ENCODE measurements at regions of chr3 and their contacts with region 1.

Region 1: DNA sequence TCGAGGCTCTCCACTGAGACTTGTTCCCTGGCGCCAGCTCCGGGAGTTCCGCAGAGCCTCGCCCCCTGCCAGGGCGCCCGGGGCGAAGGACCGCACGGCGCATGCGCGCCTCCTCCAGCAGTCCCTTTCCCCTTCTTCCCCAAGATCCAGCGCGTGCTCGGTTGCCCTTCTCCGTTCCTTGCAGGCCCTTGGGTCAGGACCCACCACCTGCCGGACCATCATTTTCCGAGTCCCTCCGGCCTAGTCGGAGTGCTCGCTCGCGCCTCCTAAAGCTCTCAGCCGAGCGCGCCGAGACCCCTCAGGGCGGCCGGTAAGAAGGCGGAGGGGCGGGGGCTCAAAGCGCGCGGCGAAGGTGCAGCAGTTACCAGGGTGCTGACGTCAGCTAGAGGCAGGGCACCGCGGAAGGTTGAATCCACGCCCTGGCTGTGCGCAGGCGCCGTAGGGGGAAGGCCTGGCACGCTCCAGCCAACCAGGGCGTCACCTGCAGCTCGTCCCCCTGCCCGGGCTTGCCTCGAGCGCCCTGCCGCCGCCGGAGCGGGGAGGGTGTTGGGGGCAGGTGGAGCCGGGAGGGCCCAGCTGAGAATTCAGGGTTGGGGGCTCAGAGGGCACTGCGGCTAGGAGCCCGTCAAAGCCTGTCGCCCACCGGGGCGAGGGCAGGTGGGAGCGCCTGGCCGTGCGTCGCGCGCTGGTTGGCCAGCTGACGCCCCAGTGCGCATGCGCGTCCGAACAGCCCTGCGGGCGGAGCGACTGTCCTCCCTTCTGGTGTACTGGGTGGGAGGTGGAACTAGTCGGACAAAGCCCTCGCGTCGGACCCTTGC is at the start of gene TCAIM:
- DNase-seq: peak; percentile 98
- H3K4me3 Mint-ChIP-seq: peak within 1 kb of the TSS; percentile 98
- H3K27ac Mint-ChIP-seq: peak within 1 kb of the TSS; percentile 97
- H3K4me1 Mint-ChIP-seq: peaks cover 17% of the 10 kb centered on the region
- H3K27me3 Mint-ChIP-seq: peaks cover 4% of the 10 kb centered on the region
- total RNA-seq, gene TCAIM: 13.6 and 14.4 TPM in 2 replicates

Region 2: DNA sequence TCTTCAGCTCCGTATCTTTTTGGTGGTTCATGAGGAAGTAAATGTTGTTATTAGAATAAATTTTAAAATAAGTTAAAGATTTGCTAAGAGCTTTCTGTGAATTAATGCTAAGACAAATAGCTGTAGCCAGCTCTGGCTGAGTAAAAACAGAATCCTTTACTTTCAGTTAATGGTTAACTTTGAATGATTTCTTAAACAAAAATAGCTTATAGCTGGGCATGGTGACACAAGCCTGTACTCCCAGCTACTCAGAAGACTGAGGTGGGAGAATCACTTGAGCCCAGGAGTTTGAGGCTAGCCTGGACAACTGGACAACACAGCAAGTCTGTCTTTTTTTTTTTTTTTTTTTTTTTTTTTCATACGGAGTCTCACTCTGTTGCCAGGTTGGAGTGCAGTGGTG is 25.4 kb after region 1 on chr3:
- intact Hi-C with region 1: no loop called
- DNase-seq: no peak
- H3K4me3 Mint-ChIP-seq: no peak overlapping the region
- H3K27ac Mint-ChIP-seq: no peak overlapping the region
- H3K4me1 Mint-ChIP-seq: no peaks in the 10 kb centered on the region
- H3K27me3 Mint-ChIP-seq: no peaks in the 10 kb centered on the region

Region 3: GRCh38 chr3:44439499-44440295 is 101.5 kb after region 1 on chr3:
- intact Hi-C with region 1: loop called (anchors 1 kb)
- DNase-seq: peak; percentile 69
- H3K4me3 Mint-ChIP-seq: peak overlapping the region; percentile 65
- H3K27ac Mint-ChIP-seq: peak overlapping the region; percentile 84
- H3K4me1 Mint-ChIP-seq: peaks cover 46% of the 10 kb centered on the region
- H3K27me3 Mint-ChIP-seq: no peaks in the 10 kb centered on the region

Region 4: GRCh38 chr3:44510000-44510368 is 171.8 kb after region 1 on chr3:
- intact Hi-C with region 1: loop called (anchors 1 kb)
- DNase-seq: no peak
- H3K4me3 Mint-ChIP-seq: peak overlapping the region; percentile 90
- H3K27ac Mint-ChIP-seq: peak overlapping the region; percentile 75
- H3K4me1 Mint-ChIP-seq: peaks cover 38% of the 10 kb centered on the region
- H3K27me3 Mint-ChIP-seq: no peaks in the 10 kb centered on the region

Region 5: DNA sequence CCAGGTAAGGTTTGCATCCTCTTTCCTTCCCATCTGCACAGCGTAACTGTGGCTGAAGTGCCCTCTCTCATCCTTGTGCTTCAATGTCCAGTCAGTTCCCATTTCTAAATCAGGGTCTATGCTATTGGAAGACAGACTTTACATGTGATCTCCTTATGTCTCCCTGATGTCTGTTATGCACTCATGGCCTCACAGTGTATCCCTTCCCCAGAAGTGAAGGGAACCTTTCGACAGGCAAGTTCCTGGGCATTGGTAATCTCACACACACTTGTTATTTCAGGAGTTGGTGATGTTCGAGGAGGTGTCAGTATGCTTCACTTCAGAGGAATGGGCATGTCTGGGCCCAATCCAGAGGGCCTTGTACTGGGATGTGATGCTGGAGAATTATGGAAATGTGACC is 294.0 kb after region 1 on chr3:
- intact Hi-C with region 1: no loop called
- DNase-seq: no peak
- H3K4me3 Mint-ChIP-seq: no peak overlapping the region
- H3K27ac Mint-ChIP-seq: no peak overlapping the region
- H3K4me1 Mint-ChIP-seq: peaks cover 4% of the 10 kb centered on the region
- H3K27me3 Mint-ChIP-seq: no peaks in the 10 kb centered on the region

Region 6: GRCh38 chr3:44861412-44862220 is 523.4 kb after region 1 on chr3 and contains the start of gene TMEM42:
- intact Hi-C with region 1: loop called (anchors 1 kb)
- DNase-seq: peak; percentile 87
- H3K4me3 Mint-ChIP-seq: peak within 1 kb of the TSS; percentile 90
- H3K27ac Mint-ChIP-seq: peak within 1 kb of the TSS; percentile 90
- H3K4me1 Mint-ChIP-seq: peaks cover 33% of the 10 kb centered on the region
- H3K27me3 Mint-ChIP-seq: no peaks in the 10 kb centered on the region
- total RNA-seq, gene TMEM42: 8.6 and 10.0 TPM in 2 replicates

Region 7: GRCh38 chr3:45486136-45486535 is 1147.9 kb after region 1 on chr3:
- intact Hi-C with region 1: no loop called
- DNase-seq: no peak
- H3K4me3 Mint-ChIP-seq: no peak overlapping the region
- H3K27ac Mint-ChIP-seq: no peak overlapping the region
- H3K4me1 Mint-ChIP-seq: peaks cover under 1% of the 10 kb centered on the region
- H3K27me3 Mint-ChIP-seq: no peaks in the 10 kb centered on the region

Measured in activated T-helper 1 cell treated with anti-CD3 and anti-CD28 coated beads, Interleukin-12 subunit alpha, Interleukin-12 subunit beta, Interleukin-2, Interleukin-4 antibody, amounts not matched to agents 30 ng/mL and 10 ng/mL and 1 ng/mL, durations not matched to agents 14 hours and 24 hours and 36 hours (primary cell).